Heart left ventricle (tissue), 16 donors: ENCODE measurements at regions of chr2 and their contacts with region 1.

Region 1: GRCh38 chr2:204545023-204545860 is at the start of gene PARD3B:
- DNase-seq: peak; percentile 49 to 81 (median 63)
- ATAC-seq: peak; percentile 82 to 98 (median 94)
- H3K4me3 ChIP-seq: peak within 1 kb of the TSS; percentile 65 to 99 (median 92)
- H3K27ac ChIP-seq: peak within 1 kb of the TSS; percentile 29 to 87 (median 72)
- H3K4me1 ChIP-seq: peaks cover 0 to 26% (median 15%) of the 10 kb centered on the region in 12 donors
- H3K27me3 ChIP-seq: peaks cover 0 to 10% (median 0%) of the 10 kb centered on the region in 9 donors
- CTCF ChIP-seq: peak in 1 of 12 donors; percentile 3
- POLR2A ChIP-seq: peak in 1 of 2 donors; percentile 25
- total RNA-seq, gene PARD3B: 4.6 to 15.1 (median 6.5) TPM

Region 2: GRCh38 chr2:204251158-204251997 is 293.9 kb before region 1 on chr2:
- intact Hi-C with region 1: no loop called
- DNase-seq: no peak
- ATAC-seq: no peak
- H3K4me3 ChIP-seq: no peak overlapping the region
- H3K27ac ChIP-seq: no peak overlapping the region
- H3K4me1 ChIP-seq: peaks cover 0 to 3% (median 0%) of the 10 kb centered on the region in 12 donors
- H3K27me3 ChIP-seq: no peaks in the 10 kb centered on the region
- CTCF ChIP-seq: no peak
- POLR2A ChIP-seq: no peak

Region 3: GRCh38 chr2:204664708-204665121 is 119.5 kb after region 1 on chr2:
- intact Hi-C with region 1: loop called in 1 of 10 experiments (anchors 10 kb)
- DNase-seq: no peak
- ATAC-seq: no peak
- H3K4me3 ChIP-seq: no peak overlapping the region
- H3K27ac ChIP-seq: peak overlapping the region in 2 of 12 donors; percentile 19 to 50
- H3K4me1 ChIP-seq: peaks cover 0 to 15% (median 4%) of the 10 kb centered on the region in 12 donors
- H3K27me3 ChIP-seq: no peaks in the 10 kb centered on the region
- CTCF ChIP-seq: no peak
- POLR2A ChIP-seq: no peak